Aorta (tissue), 5 donors: ENCODE measurements at regions of chr5 and their contacts with region 1.

Region 1: GRCh38 chr5:79514391-79515105 is 614 bp upstream of the HOMER1 start:
- DNase-seq: peak; percentile 93 to 95
- ATAC-seq: peak; percentile 93
- H3K4me3 ChIP-seq: peak overlapping the region; percentile 64 to 79
- H3K27ac ChIP-seq: peak overlapping the region; percentile 93 to 95
- H3K4me1 ChIP-seq: no peaks in the 10 kb centered on the region
- H3K27me3 ChIP-seq: no peaks in the 10 kb centered on the region

Region 2: GRCh38 chr5:79229357-79230174 is 285.0 kb before region 1 on chr5:
- intact Hi-C with region 1: no loop called
- DNase-seq: no peak
- ATAC-seq: no peak
- H3K4me3 ChIP-seq: no peak overlapping the region
- H3K27ac ChIP-seq: no peak overlapping the region
- H3K4me1 ChIP-seq: no peaks in the 10 kb centered on the region
- H3K27me3 ChIP-seq: no peaks in the 10 kb centered on the region

Region 3: GRCh38 chr5:79612667-79613198 is 98.2 kb after region 1 on chr5:
- intact Hi-C with region 1: loop called in 1 of 2 experiments (anchors 5 kb)
- DNase-seq: no peak
- ATAC-seq: peak; percentile 15
- H3K4me3 ChIP-seq: peak overlapping the region; percentile 56 to 98
- H3K27ac ChIP-seq: peak overlapping the region; percentile 20 to 65
- H3K4me1 ChIP-seq: no peaks in the 10 kb centered on the region
- H3K27me3 ChIP-seq: no peaks in the 10 kb centered on the region

Region 4: GRCh38 chr5:79806741-79807140 is 292.2 kb after region 1 on chr5:
- intact Hi-C with region 1: no loop called
- DNase-seq: no peak
- ATAC-seq: no peak
- H3K4me3 ChIP-seq: no peak overlapping the region
- H3K27ac ChIP-seq: no peak overlapping the region
- H3K4me1 ChIP-seq: no peaks in the 10 kb centered on the region
- H3K27me3 ChIP-seq: no peaks in the 10 kb centered on the region